ENCODE measurements at regions of chr6 and their contacts with region 1.

Region 1: DNA sequence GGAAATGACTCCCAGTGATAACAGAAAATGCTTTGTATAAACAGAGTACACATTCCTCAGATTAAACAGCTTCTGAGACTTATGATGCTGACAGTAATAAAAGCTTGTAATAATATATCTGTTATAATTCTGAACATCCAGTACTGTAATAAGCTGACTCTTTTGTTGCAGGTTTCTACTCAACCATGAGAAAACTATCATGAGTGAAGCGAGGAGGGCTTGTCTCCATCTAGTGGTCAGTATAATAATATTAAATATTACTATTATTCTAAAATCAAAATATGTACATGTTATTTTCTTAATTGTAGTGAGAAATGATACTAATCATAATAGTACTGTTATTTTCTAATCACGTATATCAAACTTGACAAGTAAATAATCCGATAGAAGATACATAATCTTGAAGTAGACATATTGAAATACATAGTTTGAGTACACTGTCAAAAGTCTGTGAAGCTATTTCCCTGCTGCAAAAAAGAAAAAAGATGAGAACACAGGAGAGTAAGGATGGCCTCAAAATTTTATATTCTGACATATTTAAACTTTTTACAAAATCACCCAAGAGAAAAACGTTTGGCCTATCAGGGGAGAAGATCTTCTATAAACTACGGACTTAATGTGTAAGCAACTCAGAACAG is 183.1 kb downstream of the MOXD1 start:
- DNase-seq: no peak
- H3K4me3 Mint-ChIP-seq: no peak overlapping the region
- H3K27ac Mint-ChIP-seq: no peak overlapping the region
- H3K4me1 Mint-ChIP-seq: no peaks in the 10 kb centered on the region
- H3K27me3 Mint-ChIP-seq: no peaks in the 10 kb centered on the region

Region 2: GRCh38 chr6:131914967-131915751 is 303.0 kb before region 1 on chr6:
- intact Hi-C with region 1: loop called (anchors 2 kb)
- DNase-seq: peak; percentile 85
- H3K4me3 Mint-ChIP-seq: no peak overlapping the region
- H3K27ac Mint-ChIP-seq: no peak overlapping the region
- H3K4me1 Mint-ChIP-seq: peaks cover 12% of the 10 kb centered on the region
- H3K27me3 Mint-ChIP-seq: peaks cover 36% of the 10 kb centered on the region

Region 3: DNA sequence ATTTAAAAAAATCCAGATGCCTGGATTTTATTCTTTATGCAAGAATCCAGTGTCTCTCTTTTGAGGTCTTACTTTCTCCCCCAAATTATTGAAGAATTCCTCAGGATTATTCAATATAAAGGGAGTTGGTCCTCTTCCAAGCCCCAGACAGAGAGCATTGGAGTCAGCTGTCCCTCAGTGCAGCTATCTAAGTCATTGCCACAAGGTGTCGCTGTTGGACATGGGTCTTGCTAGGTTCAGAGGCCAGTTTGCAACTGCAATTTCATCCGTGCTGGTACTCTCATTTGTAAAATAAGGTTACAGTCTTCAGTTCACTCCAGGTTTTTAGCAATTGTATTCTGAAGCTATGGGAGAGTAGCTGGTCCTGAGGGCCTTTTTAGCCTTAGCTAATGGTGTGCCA is 294.8 kb before region 1 on chr6:
- intact Hi-C with region 1: loop called (anchors 2 kb)
- DNase-seq: peak; percentile 81
- H3K4me3 Mint-ChIP-seq: no peak overlapping the region
- H3K27ac Mint-ChIP-seq: no peak overlapping the region
- H3K4me1 Mint-ChIP-seq: no peaks in the 10 kb centered on the region
- H3K27me3 Mint-ChIP-seq: peaks cover 7% of the 10 kb centered on the region